ENCODE measurements at regions of chr1 and their contacts with region 1.

Region 1: DNA sequence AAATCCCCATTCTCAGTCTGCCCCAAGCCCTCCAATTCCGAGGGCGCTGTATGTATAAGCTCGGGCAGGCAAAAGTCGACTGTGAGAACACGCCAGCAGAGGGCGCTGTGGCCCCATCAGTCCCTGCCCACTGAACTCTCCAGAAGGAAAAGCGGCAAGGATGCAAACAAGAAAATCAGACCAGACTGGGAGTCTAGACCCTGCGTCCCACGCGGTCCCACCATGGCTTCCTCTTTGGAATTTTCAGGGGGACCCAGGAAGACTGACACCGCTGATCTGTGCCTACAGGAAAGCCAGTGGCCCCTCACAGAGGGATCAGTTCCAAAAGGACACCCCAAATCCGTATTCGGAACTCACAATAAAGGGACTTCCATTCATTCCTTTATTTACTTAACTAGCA is 19.5 kb downstream of the TEX35 start:
- DNase-seq: peak; percentile 50
- H3K4me3 Mint-ChIP-seq: no peak overlapping the region
- H3K27ac Mint-ChIP-seq: no peak overlapping the region
- H3K4me1 Mint-ChIP-seq: peaks cover 7% of the 10 kb centered on the region
- H3K27me3 Mint-ChIP-seq: peaks cover 3% of the 10 kb centered on the region

Region 2: GRCh38 chr1:178168536-178168935 is 363.9 kb before region 1 on chr1:
- intact Hi-C with region 1: no loop called
- DNase-seq: no peak
- H3K4me3 Mint-ChIP-seq: no peak overlapping the region
- H3K27ac Mint-ChIP-seq: no peak overlapping the region
- H3K4me1 Mint-ChIP-seq: no peaks in the 10 kb centered on the region
- H3K27me3 Mint-ChIP-seq: no peaks in the 10 kb centered on the region

Region 3: DNA sequence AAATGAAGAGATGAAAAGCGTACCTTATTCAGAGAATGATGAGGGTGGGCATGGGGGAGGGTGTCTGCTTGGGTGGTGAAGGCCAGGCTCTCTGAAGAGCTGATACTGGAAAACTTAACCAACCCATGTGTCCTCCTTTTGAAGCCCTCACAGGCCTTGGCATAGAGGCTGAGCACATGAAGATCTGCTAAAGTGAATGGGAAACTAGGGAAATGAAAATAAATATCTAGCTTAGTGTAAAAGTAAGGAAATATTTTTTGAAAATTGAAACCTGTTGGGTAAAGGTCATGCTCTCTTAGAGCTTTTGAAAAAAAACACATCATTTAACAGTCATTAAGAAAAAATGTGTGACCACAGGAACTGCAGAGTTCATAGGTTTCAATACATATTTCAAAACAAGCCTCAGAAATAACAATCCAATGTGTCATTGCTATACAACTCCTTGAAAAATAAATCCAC is 152.2 kb after region 1 on chr1:
- intact Hi-C with region 1: no loop called
- DNase-seq: no peak
- H3K4me3 Mint-ChIP-seq: no peak overlapping the region
- H3K27ac Mint-ChIP-seq: no peak overlapping the region
- H3K4me1 Mint-ChIP-seq: no peaks in the 10 kb centered on the region
- H3K27me3 Mint-ChIP-seq: peaks cover 2% of the 10 kb centered on the region

Region 4: DNA sequence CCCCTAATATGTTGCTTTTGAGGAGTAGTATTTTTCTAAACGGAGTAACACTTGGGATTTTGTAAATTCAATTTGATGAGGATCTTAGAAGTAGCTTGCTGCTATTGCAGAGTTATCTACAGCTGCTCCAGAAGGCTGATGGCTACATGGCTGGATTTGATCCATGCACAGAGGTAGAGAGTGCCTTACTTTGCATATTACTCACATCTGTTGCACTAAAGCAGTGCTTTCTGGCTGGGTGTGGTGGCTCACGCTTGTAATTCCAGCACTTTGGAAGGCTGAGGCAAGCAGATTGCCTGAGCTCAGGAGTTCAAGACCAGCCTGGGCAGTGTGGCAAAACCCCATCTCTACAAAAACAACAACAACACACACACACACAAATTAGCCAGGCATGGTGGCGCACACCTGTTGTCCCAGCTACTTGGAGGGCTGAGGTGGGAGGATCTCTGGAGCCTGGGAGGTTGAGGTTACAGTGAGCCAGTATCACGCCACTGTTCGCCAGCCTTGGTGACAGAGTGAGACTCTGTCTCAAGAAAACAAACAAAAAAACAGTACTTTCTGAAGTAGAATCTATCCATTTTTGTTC is 217.3 kb after region 1 on chr1:
- intact Hi-C with region 1: loop called (anchors 2 kb)
- DNase-seq: no peak
- H3K4me3 Mint-ChIP-seq: no peak overlapping the region
- H3K27ac Mint-ChIP-seq: no peak overlapping the region
- H3K4me1 Mint-ChIP-seq: no peaks in the 10 kb centered on the region
- H3K27me3 Mint-ChIP-seq: no peaks in the 10 kb centered on the region